CD8-positive, alpha-beta T cell (primary cell): ENCODE measurements at regions of chr6 and their contacts with region 1.

Region 1: GRCh38 chr6:17653198-17653882 is 53.2 kb downstream of the FAM8A1 start:
- DNase-seq: no peak
- ATAC-seq: no peak
- H3K4me3 ChIP-seq: no peak overlapping the region
- H3K4me3 Mint-ChIP-seq: no peak overlapping the region
- H3K27ac ChIP-seq: no peak overlapping the region
- H3K27ac Mint-ChIP-seq: no peak overlapping the region
- H3K4me1 ChIP-seq: no peaks in the 10 kb centered on the region
- H3K4me1 Mint-ChIP-seq: peaks cover 20% of the 10 kb centered on the region
- H3K27me3 ChIP-seq: no peaks in the 10 kb centered on the region
- H3K27me3 Mint-ChIP-seq: no peaks in the 10 kb centered on the region
- CTCF ChIP-seq: no peak

Region 2: DNA sequence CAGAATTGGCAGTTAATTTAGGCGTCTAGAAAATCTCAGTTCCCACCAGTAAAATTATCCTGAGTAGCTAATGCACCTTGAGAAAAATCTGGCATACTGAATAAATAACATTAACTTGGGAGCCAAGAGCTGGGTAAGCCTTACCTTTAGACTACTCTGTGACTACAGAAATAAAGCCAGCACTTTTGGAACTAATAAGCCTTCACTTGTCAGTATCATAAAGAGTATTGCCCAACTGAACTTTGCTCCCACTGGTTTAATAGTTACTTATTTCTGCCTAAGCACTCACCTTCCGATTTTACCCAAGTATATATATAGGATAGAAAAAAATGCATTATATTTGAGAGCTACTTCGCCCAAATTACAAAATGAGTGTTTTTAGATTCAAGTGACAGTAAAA is 42.5 kb before region 1 on chr6:
- CTCF ChIA-PET with region 1: no interaction called
- POLR2A ChIA-PET with region 1: interaction called, 3 read pairs
- intact Hi-C with region 1: loop called in 1 of 2 experiments (anchors 5 kb)
- DNase-seq: no peak
- ATAC-seq: no peak
- H3K4me3 ChIP-seq: no peak overlapping the region
- H3K4me3 Mint-ChIP-seq: no peak overlapping the region
- H3K27ac ChIP-seq: peak overlapping the region in 1 of 2 experiments; percentile 9
- H3K27ac Mint-ChIP-seq: no peak overlapping the region
- H3K4me1 ChIP-seq: no peaks in the 10 kb centered on the region
- H3K4me1 Mint-ChIP-seq: peaks cover 11% of the 10 kb centered on the region
- H3K27me3 ChIP-seq: no peaks in the 10 kb centered on the region
- H3K27me3 Mint-ChIP-seq: no peaks in the 10 kb centered on the region
- CTCF ChIP-seq: no peak

Region 3: GRCh38 chr6:17628873-17629272 is 24.5 kb before region 1 on chr6:
- CTCF ChIA-PET with region 1: no interaction called
- POLR2A ChIA-PET with region 1: no interaction called
- intact Hi-C with region 1: loop called in 1 of 2 experiments (anchors 2 kb)
- DNase-seq: no peak
- ATAC-seq: no peak
- H3K4me3 ChIP-seq: no peak overlapping the region
- H3K4me3 Mint-ChIP-seq: no peak overlapping the region
- H3K27ac ChIP-seq: peak overlapping the region in 1 of 2 experiments; percentile 2
- H3K27ac Mint-ChIP-seq: peak overlapping the region; percentile 41
- H3K4me1 ChIP-seq: peaks cover 15% of the 10 kb centered on the region
- H3K4me1 Mint-ChIP-seq: peaks cover 42% of the 10 kb centered on the region
- H3K27me3 ChIP-seq: no peaks in the 10 kb centered on the region
- H3K27me3 Mint-ChIP-seq: no peaks in the 10 kb centered on the region
- CTCF ChIP-seq: no peak

Region 4: DNA sequence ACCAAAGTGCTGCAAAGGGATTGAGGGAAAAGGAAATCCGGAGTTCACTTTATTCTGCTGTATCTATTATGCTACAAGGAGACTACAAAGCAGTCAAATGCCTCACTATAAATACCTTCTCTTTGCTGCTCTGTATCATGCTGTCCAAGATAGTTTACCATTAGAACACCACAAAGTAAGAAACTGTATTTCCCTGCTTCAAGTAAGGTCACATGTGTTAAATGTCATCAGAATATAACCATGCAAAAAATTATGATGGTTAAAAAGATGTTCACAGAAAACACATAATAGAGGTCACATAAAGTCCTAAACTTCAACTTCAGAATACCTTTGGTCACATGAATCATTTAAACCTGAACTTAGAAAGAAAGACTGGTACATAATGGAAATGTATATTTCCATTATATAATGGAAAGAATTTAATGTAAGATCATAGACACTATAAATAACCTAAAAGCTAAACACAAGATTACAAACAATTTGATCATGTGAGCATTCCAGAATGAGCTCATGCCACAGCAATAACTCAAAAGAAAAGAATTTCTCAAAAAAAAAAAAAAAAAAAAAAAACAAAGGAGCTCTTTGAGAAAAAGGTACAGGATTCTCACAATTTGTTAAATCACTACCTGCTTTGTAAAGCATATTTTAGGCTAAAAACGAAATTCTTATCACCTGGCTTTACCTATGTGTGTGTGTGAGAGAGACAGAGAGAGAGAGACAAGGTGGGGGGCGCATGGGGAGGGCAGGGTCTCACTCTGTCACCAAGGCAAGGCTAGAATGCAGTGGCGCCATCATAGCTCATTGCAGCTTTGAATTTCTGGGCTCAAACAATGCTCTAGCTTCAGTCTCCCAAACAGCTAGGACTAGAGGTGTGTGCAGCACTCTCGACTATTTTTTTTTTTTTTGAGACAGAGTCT is 275.4 kb after region 1 on chr6:
- CTCF ChIA-PET with region 1: no interaction called
- POLR2A ChIA-PET with region 1: no interaction called
- intact Hi-C with region 1: no loop called
- DNase-seq: no peak
- ATAC-seq: no peak
- H3K4me3 ChIP-seq: no peak overlapping the region
- H3K4me3 Mint-ChIP-seq: no peak overlapping the region
- H3K27ac ChIP-seq: no peak overlapping the region
- H3K27ac Mint-ChIP-seq: no peak overlapping the region
- H3K4me1 ChIP-seq: no peaks in the 10 kb centered on the region
- H3K4me1 Mint-ChIP-seq: no peaks in the 10 kb centered on the region
- H3K27me3 ChIP-seq: peaks cover 0 to 3% of the 10 kb centered on the region in 2 experiments
- H3K27me3 Mint-ChIP-seq: peaks cover 10% of the 10 kb centered on the region
- CTCF ChIP-seq: no peak